ENCODE measurements at regions of chr5 and their contacts with region 1.

Region 1: DNA sequence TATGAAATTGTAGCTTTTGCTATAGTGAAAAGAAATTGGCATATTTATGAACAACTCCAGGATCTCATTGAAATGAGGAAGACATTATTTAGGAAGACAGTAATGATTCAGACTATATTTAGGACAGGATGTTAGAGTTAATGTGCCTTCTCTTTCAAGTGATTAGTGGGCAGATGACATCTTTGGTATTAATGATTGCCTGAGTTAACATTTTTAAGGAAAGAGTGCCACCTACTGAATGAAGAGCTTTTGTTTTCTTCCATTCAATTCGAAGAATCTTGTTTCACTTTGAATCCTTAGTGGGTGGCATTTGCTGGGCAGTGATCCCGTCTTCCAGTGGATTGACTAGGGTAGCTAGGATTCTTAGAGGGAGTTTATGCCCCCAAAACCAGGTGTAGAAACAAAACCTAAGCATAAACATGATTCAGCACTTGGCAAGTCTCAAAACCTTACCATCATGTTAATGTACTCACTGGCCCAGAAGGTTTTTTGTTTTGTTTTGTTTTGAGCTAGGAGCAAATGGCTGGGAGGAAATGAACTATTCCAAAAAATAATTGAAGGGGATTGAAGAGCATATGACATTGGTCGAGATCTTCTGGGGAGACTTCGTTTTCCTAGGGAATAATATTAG is 23.2 kb downstream of the MAP3K1 start:
- DNase-seq: no peak
- H3K4me3 ChIP-seq: peak overlapping the region in 1 of 2 experiments; percentile 31; a peak in 1 of 4 replicates
- H3K27ac ChIP-seq: peak overlapping the region; percentile 46 to 88; a peak in 3 of 4 replicates
- H3K4me1 ChIP-seq: peaks cover 0 to 54% of the 10 kb centered on the region in 2 experiments; a peak in 3 of 4 replicates
- H3K27me3 ChIP-seq: no peaks in the 10 kb centered on the region
- CTCF ChIP-seq: peak; percentile 71
- EP300 ChIP-seq: 0 out of 4 replicates have a peak, but pooled peaks of 1 of the 2 experiments have one; percentile 25
- RAD21 ChIP-seq: peak; percentile 83

Region 2: GRCh38 chr5:55800924-55801323 is 1037.6 kb before region 1 on chr5:
- CTCF ChIA-PET with region 1: no interaction called
- POLR2A ChIA-PET with region 1: no interaction called
- DNase-seq: no peak
- H3K4me3 ChIP-seq: no peak overlapping the region
- H3K27ac ChIP-seq: no peak overlapping the region
- H3K4me1 ChIP-seq: no peaks in the 10 kb centered on the region
- H3K27me3 ChIP-seq: no peaks in the 10 kb centered on the region
- CTCF ChIP-seq: no peak
- EP300 ChIP-seq: no peak
- RAD21 ChIP-seq: no peak

Region 3: DNA sequence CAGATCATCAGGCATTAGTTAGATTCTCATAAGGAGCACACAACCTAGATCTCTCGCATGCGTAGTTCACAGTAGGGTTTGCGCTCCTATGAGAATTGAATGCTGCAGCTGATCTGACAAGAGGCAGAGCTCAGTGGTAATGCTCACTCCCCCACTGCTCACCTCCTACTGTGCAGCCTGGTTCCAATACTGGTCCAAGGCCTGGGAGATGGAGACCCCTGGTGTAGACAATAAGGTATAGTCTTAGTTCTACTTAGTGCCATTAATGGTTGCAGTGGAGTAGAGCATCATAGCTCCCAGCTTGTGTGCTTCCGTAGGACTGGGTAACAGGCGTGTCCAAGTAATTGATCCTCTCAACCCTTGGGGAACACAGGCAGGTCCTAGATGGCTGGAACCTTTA is 535.0 kb before region 1 on chr5:
- CTCF ChIA-PET with region 1: interaction called, 14 read pairs
- POLR2A ChIA-PET with region 1: no interaction called
- DNase-seq: no peak
- H3K4me3 ChIP-seq: no peak overlapping the region
- H3K27ac ChIP-seq: peak overlapping the region in 1 of 2 experiments; percentile 100; a peak in 2 of 4 replicates
- H3K4me1 ChIP-seq: peaks cover 0 to 28% of the 10 kb centered on the region in 2 experiments; a peak in 3 of 4 replicates
- H3K27me3 ChIP-seq: no peaks in the 10 kb centered on the region
- CTCF ChIP-seq: no peak
- EP300 ChIP-seq: no peak
- RAD21 ChIP-seq: peak; percentile 41

Region 4: DNA sequence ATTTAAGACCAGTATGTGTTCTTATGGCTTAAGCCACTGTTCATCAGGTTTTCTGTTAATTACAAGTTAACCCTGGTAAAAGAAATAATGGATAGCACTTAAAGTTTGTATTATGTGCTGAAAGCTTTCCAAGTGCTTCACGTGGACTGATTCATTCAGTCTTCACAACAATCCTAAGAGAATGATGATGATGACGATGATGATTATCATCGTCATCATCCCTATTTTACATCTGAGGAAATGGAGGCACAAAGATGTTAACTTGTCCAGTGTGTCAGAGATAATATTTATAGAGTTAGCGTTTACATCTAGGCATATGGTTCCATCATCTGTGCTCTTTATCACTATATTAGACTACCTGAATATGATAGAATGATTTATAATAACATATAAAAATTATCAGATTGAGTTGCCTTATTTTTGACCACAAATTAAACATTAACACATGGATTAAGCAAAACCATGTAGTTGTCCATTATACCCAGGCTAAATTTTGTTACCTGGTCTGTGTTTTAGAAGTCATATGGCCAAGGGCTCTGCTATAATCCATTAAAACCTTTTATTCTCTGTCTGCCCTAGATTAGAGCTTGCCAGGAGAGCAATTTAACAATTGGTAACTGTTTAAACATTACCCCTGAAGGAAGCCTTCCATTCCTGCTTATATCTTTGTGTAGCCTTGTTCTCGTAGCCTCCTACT is 125.5 kb before region 1 on chr5:
- CTCF ChIA-PET with region 1: interaction called, 12 read pairs
- POLR2A ChIA-PET with region 1: no interaction called
- DNase-seq: peak; percentile 75
- H3K4me3 ChIP-seq: no peak overlapping the region
- H3K27ac ChIP-seq: peak overlapping the region in 1 of 2 experiments; percentile 99; a peak in 2 of 4 replicates
- H3K4me1 ChIP-seq: peaks cover 0 to 37% of the 10 kb centered on the region in 2 experiments; a peak in 2 of 4 replicates
- H3K27me3 ChIP-seq: no peaks in the 10 kb centered on the region
- CTCF ChIP-seq: no peak
- EP300 ChIP-seq: peak in 1 of 2 experiments; percentile 97; a peak in 2 of 4 replicates
- RAD21 ChIP-seq: peak; percentile 44

Region 5: DNA sequence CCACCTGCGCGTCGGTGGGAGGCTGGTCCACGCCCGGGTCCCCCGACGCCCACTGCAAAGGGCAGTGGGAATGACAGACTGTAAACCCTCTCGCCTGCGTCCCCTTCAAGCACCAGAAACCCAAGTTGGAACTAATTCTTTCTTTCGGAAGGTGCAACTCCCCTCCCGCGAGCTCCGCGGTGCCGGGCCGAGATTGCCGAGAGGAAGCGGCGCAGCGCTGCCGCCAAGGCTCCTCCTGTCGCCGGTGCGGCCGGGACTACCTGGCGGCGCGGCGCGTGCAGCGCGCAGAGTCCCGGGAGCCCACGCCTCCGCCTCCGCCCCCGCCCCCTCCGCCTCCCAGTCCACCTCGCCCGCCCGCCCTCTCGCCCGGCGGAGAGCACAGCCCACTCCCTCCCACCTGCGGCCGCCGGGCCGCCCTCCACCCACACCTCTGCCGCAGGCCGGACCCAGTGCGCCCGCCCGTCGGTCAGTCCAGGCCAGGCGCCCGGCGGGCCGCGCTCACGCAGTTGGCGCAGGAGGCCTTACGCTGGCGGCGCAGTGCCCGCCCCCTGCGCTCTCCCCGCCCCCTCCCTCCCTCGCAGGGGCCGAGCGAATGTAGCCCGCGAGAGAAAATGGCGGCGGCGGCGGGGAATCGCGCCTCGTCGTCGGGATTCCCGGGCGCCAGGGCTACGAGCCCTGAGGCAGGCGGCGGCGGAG is 23.4 kb before region 1 on chr5 and contains the start of gene MAP3K1:
- CTCF ChIA-PET with region 1: interaction called, 28 read pairs
- POLR2A ChIA-PET with region 1: interaction called, 3 read pairs
- DNase-seq: peak; percentile 96
- H3K4me3 ChIP-seq: peak within 1 kb of the TSS; percentile 91 to 93
- H3K27ac ChIP-seq: peak within 1 kb of the TSS; percentile 77 to 97
- H3K4me1 ChIP-seq: peaks cover 6 to 14% of the 10 kb centered on the region in 2 experiments; a peak in 3 of 4 replicates
- H3K27me3 ChIP-seq: no peaks in the 10 kb centered on the region
- CTCF ChIP-seq: no peak; the same call in 1 of the 2 replicates
- EP300 ChIP-seq: no peak
- RAD21 ChIP-seq: no peak; the same call in 1 of the 2 replicates
- polyA plus RNA-seq, gene MAP3K1: 2.2 and 3.5 TPM in 2 replicates

Region 6: GRCh38 chr5:56827049-56827448 is 11.5 kb before region 1 on chr5:
- CTCF ChIA-PET with region 1: interaction called, 17 read pairs
- POLR2A ChIA-PET with region 1: interaction called, 6 read pairs
- DNase-seq: no peak
- H3K4me3 ChIP-seq: no peak overlapping the region
- H3K27ac ChIP-seq: peak overlapping the region in 1 of 2 experiments; percentile 53; a peak in 2 of 4 replicates
- H3K4me1 ChIP-seq: peaks cover 0 to 70% of the 10 kb centered on the region in 2 experiments; a peak in 3 of 4 replicates
- H3K27me3 ChIP-seq: no peaks in the 10 kb centered on the region
- CTCF ChIP-seq: peak; percentile 34
- EP300 ChIP-seq: no peak
- RAD21 ChIP-seq: peak; percentile 32; the same call in 1 of the 2 replicates

Region 7: DNA sequence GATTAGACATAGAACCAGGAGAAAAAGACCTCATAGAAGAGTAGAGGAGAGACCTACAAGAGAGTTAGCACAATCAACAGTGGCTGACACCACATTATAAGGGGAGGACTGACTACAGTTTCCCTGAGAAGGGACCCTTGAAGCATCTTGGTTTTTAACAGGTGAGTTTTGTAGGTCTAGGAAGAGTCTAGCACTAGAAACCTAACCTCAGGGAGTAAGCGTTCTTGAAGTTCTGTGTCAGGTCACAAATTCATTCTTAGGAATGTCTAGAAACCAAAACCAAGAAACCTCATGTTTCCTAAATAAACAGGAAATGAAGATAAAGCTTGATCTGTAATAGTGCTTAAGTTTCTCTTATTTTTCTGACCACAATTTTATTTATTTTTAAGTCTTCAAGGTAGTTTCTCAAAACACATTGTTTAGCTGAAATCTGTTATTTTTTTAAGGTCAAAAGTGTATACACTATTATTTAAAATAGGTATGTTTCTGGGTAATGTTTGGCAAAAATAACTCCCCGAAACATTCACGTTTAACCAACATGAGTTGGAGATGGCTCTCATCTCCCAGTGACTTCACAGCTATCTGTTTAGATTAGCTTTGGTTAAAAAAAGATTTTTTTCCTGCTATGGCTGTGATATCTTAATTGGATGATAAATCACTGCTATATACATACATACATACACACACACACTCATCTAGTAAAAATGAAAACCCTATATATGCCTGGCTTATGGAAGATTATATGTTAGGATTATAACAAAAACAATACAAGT is 13.9 kb after region 1 on chr5:
- CTCF ChIA-PET with region 1: interaction called, 11 read pairs
- POLR2A ChIA-PET with region 1: no interaction called
- DNase-seq: no peak
- H3K4me3 ChIP-seq: no peak overlapping the region
- H3K27ac ChIP-seq: peak overlapping the region in 1 of 2 experiments; percentile 43; a peak in 2 of 4 replicates
- H3K4me1 ChIP-seq: peaks cover 17 to 32% of the 10 kb centered on the region in 2 experiments
- H3K27me3 ChIP-seq: no peaks in the 10 kb centered on the region
- CTCF ChIP-seq: no peak
- EP300 ChIP-seq: no peak
- RAD21 ChIP-seq: no peak

Measured in SK-N-SH (cell line).